ENCODE measurements at regions of chrX and their contacts with region 1.

Region 1: GRCh38 chrX:46554942-46555341 is 9.7 kb upstream of the ZNF674 start:
- DNase-seq: no peak
- H3K4me3 ChIP-seq: no peak overlapping the region
- H3K27ac ChIP-seq: no peak overlapping the region
- H3K4me1 ChIP-seq: no peaks in the 10 kb centered on the region
- H3K27me3 ChIP-seq: no peaks in the 10 kb centered on the region
- CTCF ChIP-seq: peak; percentile 30; the same call in 1 of the 2 replicates

Region 2: GRCh38 chrX:47030339-47030738 is 475.4 kb after region 1 on chrX:
- CTCF ChIA-PET with region 1: no interaction called
- POLR2A ChIA-PET with region 1: no interaction called
- intact Hi-C with region 1: loop called (anchors 10 kb)
- DNase-seq: peak in 1 of 2 experiments; percentile 49
- H3K4me3 ChIP-seq: no peak overlapping the region
- H3K27ac ChIP-seq: no peak overlapping the region
- H3K4me1 ChIP-seq: no peaks in the 10 kb centered on the region
- H3K27me3 ChIP-seq: no peaks in the 10 kb centered on the region
- CTCF ChIP-seq: peak; percentile 61